Caco-2 (cell line): ENCODE measurements at regions of chr9 and their contacts with region 1.

Region 1: GRCh38 chr9:124257844-124258606 is at the start of gene NEK6:
- DNase-seq: peak in 1 of 2 experiments; percentile 42
- H3K4me3 ChIP-seq: peak within 1 kb of the TSS; percentile 83
- H3K4me3 Mint-ChIP-seq: peak within 1 kb of the TSS; percentile 98
- H3K27ac Mint-ChIP-seq: peak within 1 kb of the TSS; percentile 96
- H3K4me1 ChIP-seq: peaks cover 32% of the 10 kb centered on the region
- H3K4me1 Mint-ChIP-seq: peaks cover 31% of the 10 kb centered on the region
- H3K27me3 ChIP-seq: no peaks in the 10 kb centered on the region
- H3K27me3 Mint-ChIP-seq: no peaks in the 10 kb centered on the region
- CTCF ChIP-seq: no peak
- total RNA-seq, gene NEK6: 56.6 and 66.6 TPM in 2 replicates

Region 2: DNA sequence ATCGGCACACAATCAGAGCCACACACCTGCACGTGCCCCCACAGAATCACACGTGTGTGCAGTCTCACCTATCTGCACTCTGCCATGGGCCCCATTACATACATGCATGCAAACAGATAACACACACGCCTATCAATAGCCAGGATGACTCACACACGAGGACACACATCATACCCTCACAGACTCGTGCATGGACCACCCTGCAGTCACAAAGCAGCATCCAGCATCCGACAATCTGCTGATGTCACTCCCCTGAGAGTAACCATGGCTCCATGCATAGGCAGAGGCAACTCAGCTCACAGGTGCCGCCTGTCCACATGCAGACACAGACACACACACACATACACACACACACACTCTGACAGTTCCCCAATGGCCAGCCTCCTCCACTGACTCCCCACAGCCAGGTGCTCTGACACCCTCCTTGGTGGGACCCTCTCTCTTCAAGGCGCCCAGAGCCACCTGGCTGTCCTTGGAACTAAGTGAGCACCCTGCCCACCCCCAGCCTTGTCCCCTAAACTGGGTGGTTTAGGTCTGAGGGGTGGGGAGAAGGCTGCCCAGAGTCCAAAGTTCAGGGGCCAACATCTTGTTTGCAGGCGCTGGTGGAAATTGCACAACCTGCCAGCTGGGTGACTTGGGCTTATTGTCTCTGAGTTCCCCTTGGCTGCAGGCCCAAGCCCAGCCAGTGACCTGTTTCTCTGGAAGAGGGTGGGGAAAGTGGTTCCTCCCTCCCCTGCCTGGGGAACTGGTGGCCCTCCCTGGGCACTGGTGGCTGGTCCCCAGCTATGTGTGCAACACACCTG is 34.9 kb before region 1 on chr9:
- CTCF ChIA-PET with region 1: no interaction called
- POLR2A ChIA-PET with region 1: interaction called, 3 read pairs
- intact Hi-C with region 1: loop called (anchors 1 kb)
- DNase-seq: peak; percentile 78 to 85
- H3K4me3 ChIP-seq: no peak overlapping the region
- H3K4me3 Mint-ChIP-seq: peak overlapping the region; percentile 14
- H3K27ac Mint-ChIP-seq: peak overlapping the region; percentile 18
- H3K4me1 ChIP-seq: peaks cover 19% of the 10 kb centered on the region
- H3K4me1 Mint-ChIP-seq: peaks cover 26% of the 10 kb centered on the region
- H3K27me3 ChIP-seq: no peaks in the 10 kb centered on the region
- H3K27me3 Mint-ChIP-seq: no peaks in the 10 kb centered on the region
- CTCF ChIP-seq: no peak

Region 3: GRCh38 chr9:124342776-124343485 is 84.9 kb after region 1 on chr9:
- CTCF ChIA-PET with region 1: no interaction called
- POLR2A ChIA-PET with region 1: no interaction called
- intact Hi-C with region 1: no loop called
- DNase-seq: no peak
- H3K4me3 ChIP-seq: no peak overlapping the region
- H3K4me3 Mint-ChIP-seq: no peak overlapping the region
- H3K27ac Mint-ChIP-seq: peak overlapping the region; percentile 10
- H3K4me1 ChIP-seq: no peaks in the 10 kb centered on the region
- H3K4me1 Mint-ChIP-seq: no peaks in the 10 kb centered on the region
- H3K27me3 ChIP-seq: no peaks in the 10 kb centered on the region
- H3K27me3 Mint-ChIP-seq: no peaks in the 10 kb centered on the region
- CTCF ChIP-seq: no peak